Activated CD4-positive, alpha-beta memory T cell treated with anti-CD3 and anti-CD28 coated beads for 36 hours (primary cell): ENCODE measurements at regions of chr1 and their contacts with region 1.

Region 1: DNA sequence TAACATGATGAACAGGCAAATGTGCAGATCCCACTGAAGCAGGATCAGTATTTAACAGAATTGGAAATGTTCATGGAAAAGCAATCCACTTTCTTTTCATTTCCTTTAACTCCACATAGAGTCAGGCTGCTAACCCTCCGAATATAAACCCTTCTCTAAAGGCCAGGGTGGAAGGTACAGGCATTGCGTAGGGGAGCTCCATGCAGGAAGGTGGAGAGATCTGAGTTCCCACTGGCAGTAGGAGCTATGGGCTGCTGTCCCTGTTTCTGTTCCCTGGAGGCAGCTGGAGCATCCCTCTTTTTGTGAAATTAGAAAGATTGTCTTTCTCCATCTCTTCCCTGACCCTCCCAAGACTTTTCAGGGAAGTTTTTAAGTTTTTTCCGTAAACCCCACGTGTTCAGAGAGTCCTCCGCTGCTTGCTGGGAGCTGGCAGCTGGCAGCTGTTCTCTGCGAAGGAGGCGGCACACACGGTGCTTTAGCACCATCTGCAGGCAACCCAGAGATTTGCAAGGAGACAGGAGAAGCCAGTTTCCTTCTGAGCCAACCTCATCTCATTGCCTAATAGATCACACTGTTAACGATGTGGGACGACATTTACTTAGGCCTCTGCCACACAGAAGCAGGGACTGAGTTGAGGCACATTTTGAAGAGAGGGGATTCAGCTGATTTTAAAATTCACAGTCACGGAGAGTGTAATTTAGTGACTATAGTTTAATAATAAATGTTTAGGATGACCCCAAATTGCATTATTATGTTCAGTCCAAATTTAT is 55.4 kb upstream of the HOOK1 start:
- DNase-seq: peak; percentile 81
- H3K4me3 Mint-ChIP-seq: peak overlapping the region; percentile 40
- H3K27ac Mint-ChIP-seq: no peak overlapping the region
- H3K4me1 Mint-ChIP-seq: peaks cover 4% of the 10 kb centered on the region
- H3K27me3 Mint-ChIP-seq: no peaks in the 10 kb centered on the region

Region 2: GRCh38 chr1:58739856-58740466 is 1019.4 kb before region 1 on chr1:
- CTCF ChIA-PET with region 1: interaction called, 16 read pairs
- POLR2A ChIA-PET with region 1: no interaction called
- intact Hi-C with region 1: loop called (anchors 1 kb)
- DNase-seq: no peak
- H3K4me3 Mint-ChIP-seq: no peak overlapping the region
- H3K27ac Mint-ChIP-seq: no peak overlapping the region
- H3K4me1 Mint-ChIP-seq: no peaks in the 10 kb centered on the region
- H3K27me3 Mint-ChIP-seq: no peaks in the 10 kb centered on the region

Region 3: DNA sequence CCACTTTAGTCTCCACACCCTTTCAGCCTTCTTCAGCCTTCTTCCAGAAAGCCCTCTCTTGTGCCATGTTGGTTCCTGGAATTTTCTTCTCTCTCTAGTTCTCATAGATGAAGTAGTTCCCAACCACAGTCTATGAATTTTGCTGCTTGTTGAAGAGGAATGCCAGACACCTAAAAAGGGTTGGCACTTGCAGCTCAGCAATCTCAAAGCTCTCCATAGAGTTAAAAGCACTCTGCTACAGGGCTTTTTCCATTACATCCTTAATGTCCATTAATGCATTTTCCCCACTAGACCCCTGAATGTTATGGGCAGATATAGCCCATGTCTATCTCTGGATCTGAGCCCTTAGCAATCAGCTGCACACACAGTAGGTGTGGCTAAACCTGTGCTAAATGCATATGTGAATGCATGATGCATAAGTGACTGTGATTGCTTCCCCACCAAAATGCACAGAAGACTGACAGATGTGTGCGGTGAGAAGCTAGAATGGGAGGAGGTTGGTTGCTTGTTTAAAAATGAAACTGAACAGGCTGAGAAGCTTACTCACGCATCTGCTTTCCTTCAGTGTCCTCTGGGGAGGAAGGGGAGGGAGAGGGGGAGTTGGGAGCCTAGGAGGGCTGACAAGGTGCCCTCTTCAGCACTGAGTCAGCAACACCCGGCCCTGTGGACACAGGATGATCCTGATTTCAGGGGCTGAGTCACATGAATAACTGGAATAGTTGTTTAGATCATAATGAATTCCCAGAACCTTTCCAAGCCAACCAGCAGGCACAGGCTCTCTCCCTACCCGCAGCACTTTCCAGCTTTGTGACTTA is 608.6 kb before region 1 on chr1:
- CTCF ChIA-PET with region 1: no interaction called
- POLR2A ChIA-PET with region 1: no interaction called
- intact Hi-C with region 1: loop called (anchors 10 kb)
- DNase-seq: peak; percentile 37
- H3K4me3 Mint-ChIP-seq: no peak overlapping the region
- H3K27ac Mint-ChIP-seq: no peak overlapping the region
- H3K4me1 Mint-ChIP-seq: peaks cover 16% of the 10 kb centered on the region
- H3K27me3 Mint-ChIP-seq: no peaks in the 10 kb centered on the region

Region 4: DNA sequence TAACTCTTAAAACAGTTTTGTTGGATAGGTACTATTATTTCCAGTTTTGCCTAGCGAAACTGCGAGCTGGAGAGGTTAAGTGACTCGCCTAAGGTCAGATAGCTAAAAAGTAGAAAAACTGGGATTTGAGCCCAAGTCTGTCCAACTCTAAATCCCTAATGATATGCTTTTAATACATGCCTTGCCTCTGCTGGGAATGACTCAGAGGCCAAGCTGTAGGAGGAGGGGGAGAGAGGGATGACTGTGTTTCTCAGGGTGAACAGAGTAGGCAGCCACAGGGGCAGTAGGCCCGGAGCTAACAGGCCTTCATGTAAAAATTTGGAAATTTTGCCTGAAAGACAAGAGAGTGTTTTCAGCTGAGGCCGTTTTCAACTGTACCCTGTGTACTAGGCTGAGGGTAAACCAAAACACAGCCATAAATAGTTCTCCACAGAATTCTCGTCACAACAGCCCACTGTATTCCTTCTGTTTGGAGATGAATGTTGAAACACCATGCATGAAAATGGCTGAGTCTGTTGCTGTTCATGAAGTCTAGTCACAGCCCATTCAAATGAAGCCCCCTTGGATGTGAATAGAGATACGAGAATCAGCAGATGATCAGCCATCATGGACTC is 52.1 kb before region 1 on chr1:
- CTCF ChIA-PET with region 1: interaction called, 10 read pairs
- POLR2A ChIA-PET with region 1: no interaction called
- intact Hi-C with region 1: no loop called
- DNase-seq: no peak
- H3K4me3 Mint-ChIP-seq: no peak overlapping the region
- H3K27ac Mint-ChIP-seq: no peak overlapping the region
- H3K4me1 Mint-ChIP-seq: no peaks in the 10 kb centered on the region
- H3K27me3 Mint-ChIP-seq: no peaks in the 10 kb centered on the region

Region 5: GRCh38 chr1:59743324-59744091 is 15.8 kb before region 1 on chr1:
- CTCF ChIA-PET with region 1: interaction called, 25 read pairs
- POLR2A ChIA-PET with region 1: no interaction called
- intact Hi-C with region 1: no loop called
- DNase-seq: no peak
- H3K4me3 Mint-ChIP-seq: no peak overlapping the region
- H3K27ac Mint-ChIP-seq: no peak overlapping the region
- H3K4me1 Mint-ChIP-seq: no peaks in the 10 kb centered on the region
- H3K27me3 Mint-ChIP-seq: no peaks in the 10 kb centered on the region

Region 6: DNA sequence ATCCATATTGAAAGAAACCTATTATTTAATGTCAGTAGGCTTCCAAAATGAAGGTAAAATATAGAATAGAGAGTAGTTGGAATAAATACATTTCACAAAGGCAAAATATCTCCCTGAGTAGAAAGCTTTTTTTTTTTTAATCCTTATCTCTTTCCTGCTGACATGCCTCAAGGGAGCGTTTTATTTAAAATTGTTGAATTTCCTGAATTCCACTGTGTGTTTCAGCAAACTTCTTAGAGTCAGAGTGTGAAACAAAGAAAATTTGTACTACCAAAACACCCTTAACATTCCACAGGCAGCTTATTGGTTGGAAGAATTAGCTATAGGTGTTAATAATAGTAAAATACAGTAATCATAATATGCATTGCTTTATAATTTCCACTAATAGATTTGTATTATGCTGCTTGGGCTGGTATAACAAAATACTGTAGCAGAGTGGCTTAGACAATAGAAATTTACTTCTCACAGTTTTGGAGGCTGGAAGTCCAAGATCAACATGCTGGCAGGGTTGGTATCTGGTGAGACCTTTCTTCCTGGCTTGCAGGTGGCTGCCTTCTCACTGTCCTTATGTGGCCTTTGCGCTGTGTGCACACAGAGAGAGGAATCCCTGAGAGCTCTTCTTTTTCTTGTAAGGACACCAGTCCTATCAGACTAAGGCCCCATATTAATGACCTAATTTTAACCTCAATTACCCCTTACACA is 782.6 kb after region 1 on chr1:
- CTCF ChIA-PET with region 1: no interaction called
- POLR2A ChIA-PET with region 1: no interaction called
- intact Hi-C with region 1: no loop called
- DNase-seq: no peak
- H3K4me3 Mint-ChIP-seq: no peak overlapping the region
- H3K27ac Mint-ChIP-seq: no peak overlapping the region
- H3K4me1 Mint-ChIP-seq: no peaks in the 10 kb centered on the region
- H3K27me3 Mint-ChIP-seq: no peaks in the 10 kb centered on the region